Prostate gland (tissue), 2 donors: ENCODE measurements at regions of chr15 and their contacts with region 1.

Region 1: DNA sequence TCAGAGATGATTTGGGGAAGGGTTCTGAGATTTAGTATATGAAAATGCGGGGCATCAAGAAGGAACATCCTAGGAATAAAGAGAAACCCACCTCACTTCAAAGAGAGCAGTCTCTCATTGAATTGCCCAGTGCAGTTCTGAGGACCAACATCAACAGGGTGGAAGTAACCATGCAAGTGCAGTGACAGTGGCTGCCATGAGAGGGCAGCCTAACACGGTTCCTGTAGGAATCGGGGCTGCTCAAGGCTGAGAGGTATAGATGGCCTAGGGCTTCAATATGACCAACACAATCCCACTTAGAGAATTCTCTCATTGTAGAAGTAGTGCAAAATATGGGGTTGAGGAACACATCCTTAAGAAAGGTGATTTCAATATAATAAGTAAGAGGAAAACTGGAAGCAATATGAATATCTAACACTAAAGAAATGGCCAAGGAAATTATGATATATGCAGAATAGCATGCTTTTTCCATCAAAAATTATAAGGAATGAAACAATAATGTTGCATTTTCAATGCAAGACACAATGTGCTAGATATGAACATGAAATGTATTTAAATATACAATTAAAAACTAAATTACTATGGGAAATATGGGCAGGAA is 51.1 kb upstream of the ARRDC4 start:
- DNase-seq: peak; percentile 40
- H3K4me3 ChIP-seq: no peak overlapping the region
- H3K27ac ChIP-seq: no peak overlapping the region
- H3K4me1 ChIP-seq: no peaks in the 10 kb centered on the region
- H3K27me3 ChIP-seq: peaks cover 2% of the 10 kb centered on the region
- CTCF ChIP-seq: peak; percentile 57 to 85 (median 80)
- POLR2A ChIP-seq: no peak

Region 2: GRCh38 chr15:98123834-98124474 is 214.6 kb after region 1 on chr15:
- intact Hi-C with region 1: no loop called
- DNase-seq: no peak
- H3K4me3 ChIP-seq: no peak overlapping the region
- H3K27ac ChIP-seq: no peak overlapping the region
- H3K4me1 ChIP-seq: peaks cover 3% of the 10 kb centered on the region
- H3K27me3 ChIP-seq: no peaks in the 10 kb centered on the region
- CTCF ChIP-seq: no peak
- POLR2A ChIP-seq: no peak

Region 3: DNA sequence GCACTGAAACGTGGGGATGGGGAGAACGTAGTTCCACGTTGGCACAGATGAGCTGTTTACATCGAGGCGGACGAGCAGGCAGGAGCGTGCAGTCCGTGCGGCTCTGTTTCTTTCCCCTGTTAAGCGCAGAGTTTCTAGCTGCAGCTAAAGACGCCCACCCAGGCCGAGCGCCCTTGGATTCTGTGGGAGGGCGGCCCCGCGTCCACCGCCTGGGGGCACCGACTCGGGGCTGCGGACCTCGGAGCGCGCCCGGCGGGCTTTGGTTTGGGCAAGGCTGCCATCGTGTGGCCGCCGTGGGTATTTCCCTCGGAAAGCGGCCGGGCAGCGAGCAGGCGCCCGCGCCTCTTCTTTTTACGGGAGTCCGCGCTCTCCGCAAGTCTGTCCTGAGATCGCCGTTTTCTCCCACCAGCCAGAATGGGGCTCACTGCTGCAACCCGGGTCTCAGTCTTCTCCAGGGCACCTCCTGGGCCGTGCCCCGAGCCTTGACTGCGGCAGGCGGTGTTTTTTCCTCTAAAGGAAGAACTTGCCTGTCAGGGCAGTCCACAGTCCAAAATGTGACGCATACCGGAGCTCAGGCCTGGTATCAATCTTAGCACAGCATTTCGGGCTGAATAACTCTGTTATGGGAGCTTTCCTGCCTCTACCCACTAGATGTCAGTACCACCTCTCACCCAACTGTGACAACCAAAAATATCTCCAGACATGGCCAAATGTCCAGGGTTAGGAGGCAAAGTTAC is 519.0 kb after region 1 on chr15:
- intact Hi-C with region 1: loop called (anchors 10 kb)
- DNase-seq: peak; percentile 58
- H3K4me3 ChIP-seq: peak overlapping the region; percentile 4 to 20
- H3K27ac ChIP-seq: no peak overlapping the region
- H3K4me1 ChIP-seq: no peaks in the 10 kb centered on the region
- H3K27me3 ChIP-seq: no peaks in the 10 kb centered on the region
- CTCF ChIP-seq: peak; percentile 48 to 89 (median 76)
- POLR2A ChIP-seq: no peak